HepG2 (cell line): ENCODE measurements at regions of chr3 and their contacts with region 1.

Region 1: DNA sequence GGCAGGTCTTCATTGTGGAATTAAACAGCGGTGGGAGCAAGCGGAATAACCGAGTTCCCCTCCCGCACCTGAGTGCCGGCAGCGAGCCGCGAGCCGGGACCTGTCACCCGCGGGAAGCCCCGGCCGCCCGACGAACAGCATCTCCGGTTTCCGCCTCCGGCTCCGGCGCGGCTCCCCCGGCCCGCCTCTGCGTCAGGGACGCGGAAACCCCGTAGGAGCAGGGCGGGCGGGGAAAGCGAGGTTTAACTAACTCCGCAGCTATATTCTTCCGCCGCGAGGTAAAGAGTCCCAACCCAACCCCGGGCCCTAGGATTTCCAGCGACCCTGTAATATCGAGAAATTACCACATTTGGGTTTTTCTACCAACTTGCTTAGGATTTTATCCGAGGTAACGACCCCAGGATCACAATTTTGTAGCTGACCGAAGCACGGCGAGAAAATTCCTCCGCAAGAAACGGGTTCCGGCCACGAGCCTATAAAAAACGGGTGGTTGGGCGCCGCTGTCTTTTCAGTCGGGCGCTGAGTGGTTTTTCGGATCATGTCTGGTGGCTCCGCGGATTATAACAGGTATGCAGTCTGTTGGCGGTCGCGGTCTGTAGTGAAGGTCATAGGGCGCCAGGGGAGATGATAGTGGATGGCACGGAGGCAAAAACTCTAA is at the start of gene EIF4A2:
- DNase-seq: peak; percentile 78
- ATAC-seq: peak; percentile 78
- H3K4me3 ChIP-seq: peak within 1 kb of the TSS; percentile 91 to 98 (median 95)
- H3K27ac ChIP-seq: peak within 1 kb of the TSS; percentile 99
- H3K4me1 ChIP-seq: peaks cover 54% of the 10 kb centered on the region
- H3K27me3 ChIP-seq: no peaks in the 10 kb centered on the region; a peak in 1 of 5 replicates
- CTCF ChIP-seq: no peak
- EP300 ChIP-seq: no peak; a peak in 1 of 4 replicates
- POLR2A ChIP-seq: peak; percentile 88 to 99
- RAD21 ChIP-seq: peak; percentile 27; the same call in 1 of the 2 replicates
- total RNA-seq, gene EIF4A2: 446 and 480 TPM in 2 replicates

Region 2: GRCh38 chr3:186570096-186570940 is 212.9 kb before region 1 on chr3 and contains the start of gene DNAJB11:
- CTCF ChIA-PET with region 1: no interaction called
- POLR2A ChIA-PET with region 1: interaction called, 26 read pairs
- in situ Hi-C with region 1: no loop called
- intact Hi-C with region 1: no loop called
- DNase-seq: peak; percentile 99
- ATAC-seq: peak; percentile 89
- H3K4me3 ChIP-seq: peak within 1 kb of the TSS; percentile 86 to 100 (median 93)
- H3K27ac ChIP-seq: peak within 1 kb of the TSS; percentile 86
- H3K4me1 ChIP-seq: peaks cover 61% of the 10 kb centered on the region
- H3K27me3 ChIP-seq: no peaks in the 10 kb centered on the region; a peak in 1 of 5 replicates
- CTCF ChIP-seq: peak; percentile 37; the same call in 1 of the 2 replicates
- EP300 ChIP-seq: peak; percentile 23 to 70; a peak in 2 of 4 replicates
- POLR2A ChIP-seq: peak; percentile 87 to 98
- RAD21 ChIP-seq: peak; percentile 56
- total RNA-seq, gene DNAJB11: 62.5 and 132 TPM in 2 replicates

Region 3: GRCh38 chr3:186617038-186617946 is 165.9 kb before region 1 on chr3:
- CTCF ChIA-PET with region 1: no interaction called
- POLR2A ChIA-PET with region 1: interaction called, 17 read pairs
- in situ Hi-C with region 1: no loop called
- intact Hi-C with region 1: no loop called
- DNase-seq: peak; percentile 49
- ATAC-seq: peak; percentile 46
- H3K4me3 ChIP-seq: 0 out of 6 replicates have a peak overlapping the region, but pooled peaks of 1 of the 3 experiments have one; percentile 17
- H3K27ac ChIP-seq: peak overlapping the region; percentile 28
- H3K4me1 ChIP-seq: peaks cover 53% of the 10 kb centered on the region
- H3K27me3 ChIP-seq: no peaks in the 10 kb centered on the region; a peak in 1 of 5 replicates
- CTCF ChIP-seq: peak; percentile 85
- EP300 ChIP-seq: no peak
- POLR2A ChIP-seq: peak in 1 of 2 experiments; percentile 61; a peak in 3 of 4 replicates
- RAD21 ChIP-seq: peak; percentile 89

Region 4: GRCh38 chr3:186754006-186754405 is 29.2 kb before region 1 on chr3:
- CTCF ChIA-PET with region 1: no interaction called
- POLR2A ChIA-PET with region 1: interaction called, 10 read pairs
- in situ Hi-C with region 1: no loop called
- intact Hi-C with region 1: no loop called
- DNase-seq: no peak
- ATAC-seq: no peak
- H3K4me3 ChIP-seq: no peak overlapping the region
- H3K27ac ChIP-seq: no peak overlapping the region
- H3K4me1 ChIP-seq: peaks cover 7% of the 10 kb centered on the region
- H3K27me3 ChIP-seq: no peaks in the 10 kb centered on the region
- CTCF ChIP-seq: no peak
- EP300 ChIP-seq: no peak
- POLR2A ChIP-seq: no peak
- RAD21 ChIP-seq: no peak

Region 5: DNA sequence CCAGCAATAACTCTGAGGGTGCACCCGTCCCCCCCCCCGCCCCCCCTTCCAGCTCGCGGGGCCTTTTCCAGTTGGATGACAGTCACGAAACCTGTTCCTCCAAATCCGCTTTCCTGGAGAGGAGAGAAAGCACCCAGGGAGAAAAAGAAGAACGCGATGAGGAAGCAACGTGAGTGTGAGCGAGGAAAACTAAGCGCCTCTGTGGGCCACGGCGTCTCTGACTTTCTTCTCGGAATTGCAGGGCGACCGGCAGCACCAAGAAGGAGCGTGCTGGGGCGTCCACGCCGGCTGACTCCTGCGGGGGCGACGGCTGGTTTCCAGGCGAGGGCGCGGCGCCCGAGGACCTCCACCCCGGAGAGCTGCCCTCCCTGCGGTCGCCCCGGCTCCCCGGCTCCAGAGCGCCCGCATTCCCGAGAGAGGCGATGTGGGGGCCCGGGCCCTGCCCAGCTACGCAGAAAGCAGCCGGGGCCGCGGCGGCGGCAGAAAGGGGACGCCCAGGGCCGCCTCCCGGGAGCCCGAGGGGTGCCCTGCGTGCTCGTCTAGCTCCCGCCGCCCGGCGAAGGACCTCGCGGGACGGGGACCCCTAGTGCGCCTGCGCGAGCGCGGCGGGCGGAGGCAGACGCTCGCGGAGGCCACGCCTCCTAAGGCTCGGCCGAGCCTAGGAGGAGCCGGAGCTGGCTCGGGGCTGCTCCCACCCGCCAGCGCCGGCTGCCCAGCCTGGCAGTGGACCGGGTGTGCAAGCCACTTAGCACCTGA is 44.0 kb after region 1 on chr3:
- CTCF ChIA-PET with region 1: no interaction called
- POLR2A ChIA-PET with region 1: interaction called, 14 read pairs
- in situ Hi-C with region 1: no loop called
- intact Hi-C with region 1: no loop called
- DNase-seq: peak; percentile 60
- ATAC-seq: peak; percentile 73
- H3K4me3 ChIP-seq: peak overlapping the region; percentile 41 to 70 (median 46)
- H3K27ac ChIP-seq: no peak overlapping the region
- H3K4me1 ChIP-seq: peaks cover 35% of the 10 kb centered on the region
- H3K27me3 ChIP-seq: peaks cover 0 to 42% of the 10 kb centered on the region in 2 experiments; a peak in 4 of 5 replicates
- CTCF ChIP-seq: no peak
- EP300 ChIP-seq: no peak
- POLR2A ChIP-seq: peak in 1 of 2 experiments; percentile 73; a peak in 2 of 4 replicates
- RAD21 ChIP-seq: peak; percentile 34